ENCODE measurements at regions of chr10 and their contacts with region 1.

Region 1: GRCh38 chr10:60816628-60817397 is 38.5 kb downstream of the CDK1 start:
- DNase-seq: peak; percentile 42
- ATAC-seq: peak; percentile 86
- H3K4me3 Mint-ChIP-seq: no peak overlapping the region
- H3K27ac Mint-ChIP-seq: no peak overlapping the region
- H3K4me1 Mint-ChIP-seq: no peaks in the 10 kb centered on the region
- H3K27me3 Mint-ChIP-seq: no peaks in the 10 kb centered on the region

Region 2: DNA sequence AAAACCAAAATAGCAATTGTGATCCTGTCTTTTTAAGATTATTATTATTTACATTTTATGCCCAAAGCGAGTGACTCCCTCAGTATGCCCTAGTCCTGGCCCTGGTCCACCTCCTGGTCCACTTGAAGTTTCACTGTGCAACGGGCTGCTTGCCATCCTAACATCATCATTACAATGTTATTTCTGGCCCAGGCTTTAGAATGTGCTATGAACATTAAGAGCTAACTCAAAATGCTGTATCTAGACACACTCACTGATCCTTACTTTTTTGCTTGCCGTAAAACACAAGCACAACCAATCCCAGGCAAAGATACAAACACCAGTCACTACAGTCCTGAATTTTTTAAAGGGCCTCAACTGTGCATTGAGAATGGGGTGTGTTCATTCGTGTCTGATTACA is 88.8 kb after region 1 on chr10:
- CTCF ChIA-PET with region 1: no interaction called
- POLR2A ChIA-PET with region 1: no interaction called
- intact Hi-C with region 1: loop called in 1 of 2 experiments (anchors 5 kb)
- DNase-seq: no peak
- ATAC-seq: no peak
- H3K4me3 Mint-ChIP-seq: no peak overlapping the region
- H3K27ac Mint-ChIP-seq: no peak overlapping the region
- H3K4me1 Mint-ChIP-seq: peaks cover 2% of the 10 kb centered on the region
- H3K27me3 Mint-ChIP-seq: peaks cover under 1% of the 10 kb centered on the region

Region 3: DNA sequence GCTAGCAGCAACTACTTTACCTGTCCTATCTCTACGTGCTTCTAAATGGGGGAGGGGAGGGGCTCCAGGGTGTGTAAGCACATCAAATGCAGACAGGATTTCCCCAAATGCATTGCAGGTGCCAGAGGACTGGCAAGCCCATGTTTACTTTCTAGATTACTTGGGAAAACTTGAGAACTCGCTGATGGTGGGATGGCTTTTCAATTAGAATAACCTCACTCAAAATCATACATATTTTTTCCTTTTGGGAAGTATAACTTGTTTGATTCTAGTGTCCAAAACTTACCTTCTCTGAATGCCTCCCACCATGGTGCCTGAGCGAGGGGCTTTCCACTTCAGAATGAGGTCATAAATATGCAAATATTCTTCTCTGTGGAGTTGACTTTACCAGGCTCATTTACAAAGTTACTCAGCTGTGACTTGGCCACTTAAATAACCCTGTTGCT is 318.5 kb after region 1 on chr10:
- CTCF ChIA-PET with region 1: no interaction called
- POLR2A ChIA-PET with region 1: no interaction called
- intact Hi-C with region 1: loop called in 1 of 2 experiments (anchors 5 kb)
- DNase-seq: no peak
- ATAC-seq: no peak
- H3K4me3 Mint-ChIP-seq: no peak overlapping the region
- H3K27ac Mint-ChIP-seq: no peak overlapping the region
- H3K4me1 Mint-ChIP-seq: no peaks in the 10 kb centered on the region
- H3K27me3 Mint-ChIP-seq: no peaks in the 10 kb centered on the region

Region 4: DNA sequence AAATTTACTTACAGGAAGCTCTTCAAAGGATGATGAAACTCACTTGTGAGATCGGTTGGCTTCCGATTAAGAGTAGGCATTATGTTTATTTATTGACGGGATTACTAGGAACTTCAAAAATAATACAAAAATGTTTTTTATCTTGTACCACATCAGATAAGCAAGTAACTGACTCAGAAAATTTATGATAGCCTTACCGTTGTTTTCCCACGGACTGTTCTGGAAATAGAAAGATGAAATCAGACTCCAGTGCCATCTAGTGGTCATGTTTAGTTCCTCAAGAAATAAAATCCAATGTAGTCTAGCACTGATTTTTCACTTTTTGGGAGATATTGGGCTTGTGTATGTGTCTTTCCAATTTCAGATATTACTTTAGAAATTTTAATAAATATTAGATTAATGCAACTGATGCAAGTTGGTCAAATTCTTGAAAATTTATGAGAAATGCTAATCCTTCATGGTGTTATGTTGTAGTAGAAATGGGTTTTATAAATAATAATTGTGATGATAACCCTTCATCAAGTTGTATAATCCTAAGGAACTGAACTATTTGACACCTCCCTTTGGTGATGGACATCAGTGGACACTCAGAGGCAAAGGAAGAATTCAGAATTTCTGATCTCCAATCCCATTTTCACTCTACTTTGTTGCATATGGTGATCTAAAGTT is 467.5 kb after region 1 on chr10:
- CTCF ChIA-PET with region 1: interaction called, 4 read pairs
- POLR2A ChIA-PET with region 1: no interaction called
- intact Hi-C with region 1: loop called in 1 of 2 experiments (anchors 1 kb)
- DNase-seq: no peak
- ATAC-seq: no peak
- H3K4me3 Mint-ChIP-seq: peak overlapping the region; percentile 35
- H3K27ac Mint-ChIP-seq: no peak overlapping the region
- H3K4me1 Mint-ChIP-seq: peaks cover 15% of the 10 kb centered on the region
- H3K27me3 Mint-ChIP-seq: no peaks in the 10 kb centered on the region